HEK293 (cell line): ENCODE measurements at regions of chr18 and their contacts with region 1.

Region 1: DNA sequence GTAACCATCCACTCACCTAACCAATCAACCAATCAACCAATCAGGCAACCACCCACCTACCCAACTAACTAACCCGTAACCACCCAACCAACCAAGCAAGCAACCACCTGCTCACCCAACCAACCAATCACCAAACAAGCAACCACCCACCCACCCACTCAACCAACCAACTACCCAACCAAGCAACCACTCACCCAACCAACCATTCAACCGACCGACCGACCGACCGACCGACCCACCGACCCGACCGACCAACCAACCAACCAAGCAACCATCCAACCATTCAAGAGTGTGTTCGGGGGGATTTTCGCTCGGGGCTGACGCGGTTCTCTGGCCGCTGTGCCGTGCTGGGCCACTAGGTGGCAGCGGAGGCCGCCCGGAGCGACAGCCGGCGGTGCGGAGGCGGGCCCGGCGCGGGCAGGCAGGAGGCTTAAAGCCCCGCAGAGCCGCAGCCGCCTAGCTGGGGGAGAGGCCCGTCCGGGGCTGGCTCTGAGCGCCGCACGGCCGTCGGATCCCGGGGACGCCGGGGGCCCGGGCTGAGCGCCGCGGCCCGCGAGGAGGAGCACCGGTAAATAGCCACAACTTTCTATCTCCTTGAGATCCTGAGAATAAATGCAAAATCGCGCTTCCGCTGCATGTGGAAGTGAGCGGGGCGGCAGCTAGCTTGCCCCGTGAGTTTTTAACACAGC is at the start of gene MC5R:
- H3K4me3 ChIP-seq: peak within 1 kb of the TSS; percentile 11
- H3K27ac ChIP-seq: no peak within 1 kb of the TSS
- H3K4me1 ChIP-seq: no peaks in the 10 kb centered on the region
- CTCF ChIP-seq: peak; percentile 92

Region 2: DNA sequence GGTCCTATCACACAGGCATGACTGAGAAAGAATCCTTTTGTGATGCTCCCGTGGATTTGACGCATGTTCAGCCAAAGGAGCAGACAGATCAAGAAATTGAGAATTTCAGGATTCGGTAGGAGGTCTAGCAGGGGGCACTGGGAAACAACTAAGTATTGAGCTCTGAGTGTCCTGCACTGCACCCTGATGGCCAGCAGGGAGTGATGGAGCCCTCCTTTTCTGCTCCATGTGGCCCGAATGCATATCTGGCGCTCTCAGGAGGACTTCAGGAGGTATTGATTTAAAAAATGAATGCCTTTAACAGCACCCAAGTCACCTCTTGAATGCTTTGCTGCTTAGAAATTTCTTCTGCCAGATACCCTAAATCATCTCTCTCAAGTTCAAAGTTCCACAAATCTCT is 250.3 kb after region 1 on chr18:
- CTCF ChIA-PET with region 1: interaction called, 16 read pairs
- POLR2A ChIA-PET with region 1: no interaction called
- H3K4me3 ChIP-seq: no peak overlapping the region
- H3K27ac ChIP-seq: no peak overlapping the region
- H3K4me1 ChIP-seq: no peaks in the 10 kb centered on the region
- CTCF ChIP-seq: no peak